Naive thymus-derived CD4-positive, alpha-beta T cell (primary cell): ENCODE measurements at regions of chr16 and their contacts with region 1.

Region 1: GRCh38 chr16:10737068-10737625 is 6.5 kb upstream of the NUBP1 start:
- DNase-seq: peak; percentile 36 to 86 (median 74)
- ATAC-seq: peak; percentile 94
- H3K4me3 ChIP-seq: peak overlapping the region; percentile 13
- H3K4me3 Mint-ChIP-seq: peak overlapping the region in 9 of 10 donors; percentile 13 to 76 (median 62)
- H3K27ac ChIP-seq: no peak overlapping the region
- H3K27ac Mint-ChIP-seq: peak overlapping the region in 8 of 9 donors; percentile 15 to 85 (median 64)
- H3K4me1 ChIP-seq: peaks cover 0 to 4% of the 10 kb centered on the region in 2 donors
- H3K4me1 Mint-ChIP-seq: peaks cover 0 to 34% (median 4%) of the 10 kb centered on the region in 7 donors
- H3K27me3 ChIP-seq: no peaks in the 10 kb centered on the region
- H3K27me3 Mint-ChIP-seq: peaks cover 0 to 5% (median 0%) of the 10 kb centered on the region in 5 donors

Region 2: DNA sequence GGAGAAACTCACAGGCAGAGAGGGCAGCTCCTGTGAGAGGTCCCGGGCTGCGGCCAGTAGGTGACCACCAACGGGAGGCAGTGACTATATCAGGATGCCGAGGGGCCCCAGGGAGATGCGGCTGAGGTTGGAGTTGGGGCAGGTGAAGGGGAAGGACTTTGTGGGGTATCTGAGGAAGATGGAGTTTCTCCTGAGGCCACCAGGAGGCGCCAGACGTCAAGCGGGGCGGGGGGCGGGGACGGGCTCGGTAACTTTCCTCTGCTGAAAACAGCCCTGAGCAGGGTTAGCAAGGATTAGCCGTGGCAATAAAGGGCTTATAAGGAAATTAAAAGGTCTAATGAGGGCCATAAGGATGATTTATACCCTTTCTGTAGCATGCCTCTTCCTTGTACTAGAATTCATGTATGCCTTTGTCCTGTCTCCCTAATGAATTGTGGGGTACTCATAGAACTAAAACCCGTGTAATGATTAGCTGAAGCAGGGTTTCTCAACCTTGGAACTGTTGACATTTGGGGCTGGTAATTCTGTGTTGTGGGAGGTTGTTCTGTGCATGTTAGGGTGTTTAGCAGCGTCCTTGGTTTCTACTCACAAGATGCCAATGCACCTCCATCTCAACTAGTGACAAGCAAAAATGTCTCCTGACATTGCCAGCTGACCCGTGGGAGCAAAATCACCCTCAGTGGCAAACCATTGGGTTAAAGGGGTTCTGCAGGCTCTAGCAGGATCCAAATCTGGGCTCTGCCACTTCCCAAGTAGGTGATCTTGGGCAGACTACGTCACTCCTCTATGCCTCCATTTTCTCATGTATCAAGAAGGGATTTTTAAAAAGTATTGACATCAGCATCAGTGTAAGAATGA is 480.1 kb before region 1 on chr16:
- CTCF ChIA-PET with region 1: interaction called, 7 read pairs
- POLR2A ChIA-PET with region 1: interaction called, 4 read pairs
- intact Hi-C with region 1: loop called (anchors 1 kb)
- DNase-seq: peak; percentile 10 to 52 (median 30)
- ATAC-seq: peak; percentile 74
- H3K4me3 ChIP-seq: no peak overlapping the region
- H3K4me3 Mint-ChIP-seq: peak overlapping the region in 1 of 10 donors; percentile 29
- H3K27ac ChIP-seq: no peak overlapping the region
- H3K27ac Mint-ChIP-seq: peak overlapping the region in 2 of 9 donors; percentile 55 to 56
- H3K4me1 ChIP-seq: no peaks in the 10 kb centered on the region
- H3K4me1 Mint-ChIP-seq: peaks cover 0 to 5% (median 3%) of the 10 kb centered on the region in 7 donors
- H3K27me3 ChIP-seq: no peaks in the 10 kb centered on the region
- H3K27me3 Mint-ChIP-seq: peaks cover 1 to 11% (median 7%) of the 10 kb centered on the region in 5 donors

Region 3: GRCh38 chr16:10314811-10315210 is 422.3 kb before region 1 on chr16:
- CTCF ChIA-PET with region 1: interaction called, 11 read pairs
- POLR2A ChIA-PET with region 1: no interaction called
- intact Hi-C with region 1: loop called (anchors 1 to 5 kb)
- DNase-seq: peak in 6 of 9 donors; percentile 25 to 63 (median 46)
- ATAC-seq: peak; percentile 65
- H3K4me3 ChIP-seq: no peak overlapping the region
- H3K4me3 Mint-ChIP-seq: no peak overlapping the region
- H3K27ac ChIP-seq: no peak overlapping the region
- H3K27ac Mint-ChIP-seq: no peak overlapping the region
- H3K4me1 ChIP-seq: no peaks in the 10 kb centered on the region
- H3K4me1 Mint-ChIP-seq: peaks cover 9 to 27% (median 20%) of the 10 kb centered on the region in 7 donors
- H3K27me3 ChIP-seq: no peaks in the 10 kb centered on the region
- H3K27me3 Mint-ChIP-seq: no peaks in the 10 kb centered on the region

Region 4: DNA sequence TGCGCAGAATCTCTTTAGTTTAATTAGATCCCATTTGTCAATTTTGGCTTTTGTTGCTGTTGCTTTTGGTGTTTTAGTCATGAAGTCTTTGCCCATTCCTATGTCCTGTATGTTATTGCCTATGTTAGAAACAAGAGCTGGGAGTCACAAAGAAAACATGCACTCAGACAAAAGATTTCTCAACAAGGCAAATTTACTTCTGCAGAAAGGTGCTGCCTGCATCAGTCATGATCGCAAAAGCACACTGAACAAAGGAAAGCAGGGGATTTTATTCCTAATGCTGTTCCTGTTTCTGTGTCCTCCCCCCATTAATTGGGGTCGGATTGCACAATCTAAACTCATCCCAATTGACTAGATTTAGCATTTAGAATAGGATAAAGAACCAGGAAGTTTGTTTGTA is 295.4 kb before region 1 on chr16:
- CTCF ChIA-PET with region 1: no interaction called
- POLR2A ChIA-PET with region 1: no interaction called
- intact Hi-C with region 1: no loop called
- DNase-seq: no peak
- ATAC-seq: no peak
- H3K4me3 ChIP-seq: no peak overlapping the region
- H3K4me3 Mint-ChIP-seq: no peak overlapping the region
- H3K27ac ChIP-seq: no peak overlapping the region
- H3K27ac Mint-ChIP-seq: no peak overlapping the region
- H3K4me1 ChIP-seq: no peaks in the 10 kb centered on the region
- H3K4me1 Mint-ChIP-seq: peaks cover 0 to 1% (median 0%) of the 10 kb centered on the region in 7 donors
- H3K27me3 ChIP-seq: no peaks in the 10 kb centered on the region
- H3K27me3 Mint-ChIP-seq: no peaks in the 10 kb centered on the region

Region 5: DNA sequence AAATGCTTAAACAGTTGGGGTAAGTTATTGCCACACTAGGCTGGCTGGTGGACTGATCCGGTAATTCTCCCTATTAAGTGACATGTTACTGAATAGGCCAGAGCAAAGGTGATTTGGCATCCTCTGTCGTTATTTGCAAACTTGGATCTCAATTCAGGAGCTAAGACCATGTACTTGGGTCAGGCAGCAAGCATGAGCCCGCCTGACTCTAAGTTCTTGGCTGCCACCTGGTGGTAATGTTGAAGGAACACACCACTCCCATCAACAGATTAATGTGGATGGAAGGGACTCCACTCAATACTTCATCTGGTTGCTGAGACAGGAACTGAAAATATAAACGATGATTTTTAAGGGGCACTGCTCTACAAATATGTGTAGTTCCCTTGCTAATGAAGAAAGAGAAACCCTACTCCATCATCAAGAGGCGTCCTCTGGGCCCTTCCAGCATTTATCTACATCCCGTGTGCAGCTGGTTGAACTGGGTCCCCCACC is 227.6 kb before region 1 on chr16:
- CTCF ChIA-PET with region 1: interaction called, 33 read pairs
- POLR2A ChIA-PET with region 1: interaction called, 5 read pairs
- intact Hi-C with region 1: loop called (anchors 1 kb)
- DNase-seq: peak; percentile 18 to 78 (median 65)
- ATAC-seq: peak; percentile 90
- H3K4me3 ChIP-seq: no peak overlapping the region
- H3K4me3 Mint-ChIP-seq: no peak overlapping the region
- H3K27ac ChIP-seq: no peak overlapping the region
- H3K27ac Mint-ChIP-seq: peak overlapping the region in 5 of 9 donors; percentile 6 to 69 (median 53)
- H3K4me1 ChIP-seq: no peaks in the 10 kb centered on the region
- H3K4me1 Mint-ChIP-seq: peaks cover 2 to 10% (median 4%) of the 10 kb centered on the region in 7 donors
- H3K27me3 ChIP-seq: no peaks in the 10 kb centered on the region
- H3K27me3 Mint-ChIP-seq: peaks cover 0 to 8% (median 0%) of the 10 kb centered on the region in 5 donors

Region 6: DNA sequence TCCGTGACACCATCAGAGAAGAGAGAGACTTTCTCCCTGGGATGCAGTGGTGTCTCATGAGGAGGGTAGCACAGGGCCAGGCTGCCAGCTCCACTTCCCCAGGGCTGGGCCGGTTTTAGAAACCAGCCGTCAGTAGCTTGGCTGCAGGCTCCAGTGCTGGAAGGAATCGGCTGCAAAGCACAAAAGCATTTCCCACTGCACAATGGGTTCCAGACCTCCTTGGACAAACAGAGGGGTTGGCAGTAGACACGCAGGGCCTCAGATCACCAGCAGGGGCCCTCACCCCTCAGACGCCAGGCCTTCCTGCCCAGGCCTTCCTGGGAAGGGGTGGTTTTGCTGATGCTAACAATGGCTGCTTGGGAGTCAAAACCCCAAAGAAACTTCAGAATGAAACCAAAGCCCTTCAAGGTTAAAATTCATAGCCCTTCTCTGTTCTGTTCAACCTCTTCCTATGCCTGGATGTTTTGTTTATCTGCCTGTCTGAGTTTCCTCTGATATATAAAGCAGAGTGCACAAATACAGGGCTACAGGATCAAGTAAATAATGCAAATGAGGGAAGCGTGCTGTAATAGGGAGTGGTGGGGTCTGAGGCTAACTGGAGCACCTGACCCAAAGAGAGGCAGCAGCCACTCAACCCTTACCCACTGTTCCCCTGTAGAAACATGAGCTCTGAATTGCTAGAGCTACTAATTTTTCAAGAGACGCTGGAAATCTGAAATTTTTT is 68.7 kb before region 1 on chr16:
- CTCF ChIA-PET with region 1: no interaction called
- POLR2A ChIA-PET with region 1: no interaction called
- intact Hi-C with region 1: loop called (anchors 1 to 2 kb)
- DNase-seq: peak in 1 of 9 donors; percentile 2
- ATAC-seq: no peak
- H3K4me3 ChIP-seq: no peak overlapping the region
- H3K4me3 Mint-ChIP-seq: no peak overlapping the region
- H3K27ac ChIP-seq: no peak overlapping the region
- H3K27ac Mint-ChIP-seq: no peak overlapping the region
- H3K4me1 ChIP-seq: no peaks in the 10 kb centered on the region
- H3K4me1 Mint-ChIP-seq: peaks cover 0 to 2% (median 0%) of the 10 kb centered on the region in 7 donors
- H3K27me3 ChIP-seq: no peaks in the 10 kb centered on the region
- H3K27me3 Mint-ChIP-seq: peaks cover 0 to 16% (median 4%) of the 10 kb centered on the region in 5 donors

Region 7: DNA sequence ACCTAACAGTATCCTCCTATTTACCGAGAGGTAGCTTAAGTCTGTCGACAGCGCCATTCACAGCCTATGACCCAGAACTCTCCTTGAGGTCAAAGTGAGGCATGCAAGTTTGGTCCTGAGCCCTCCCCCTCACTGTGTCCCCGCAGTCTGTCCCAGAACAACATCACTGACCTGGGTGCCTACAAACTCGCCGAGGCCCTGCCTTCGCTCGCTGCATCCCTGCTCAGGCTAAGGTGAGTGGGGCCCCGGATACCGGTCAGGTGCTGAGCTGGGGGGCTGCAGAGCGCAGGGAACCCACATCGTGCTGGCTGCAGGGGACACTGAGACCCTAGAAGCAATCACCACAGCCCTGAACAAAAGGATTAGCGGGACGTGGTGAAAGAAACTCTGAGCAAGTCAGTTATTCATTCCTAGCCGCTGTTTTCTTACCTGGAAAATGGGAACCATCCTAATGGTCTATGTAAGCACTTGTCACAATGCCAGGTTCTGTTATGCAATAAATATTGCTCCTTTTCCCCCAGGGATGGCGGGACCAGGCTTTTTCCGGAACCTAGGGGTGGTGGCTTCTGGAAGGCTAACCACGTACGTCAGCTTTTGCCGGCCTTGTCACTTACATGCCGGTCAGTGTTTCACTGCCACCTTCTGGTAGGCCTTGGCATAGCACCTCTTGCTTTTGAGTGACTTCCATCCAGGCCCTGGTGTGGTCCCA is 181.3 kb after region 1 on chr16:
- CTCF ChIA-PET with region 1: no interaction called
- POLR2A ChIA-PET with region 1: no interaction called
- intact Hi-C with region 1: loop called in 1 of 2 experiments (anchors 1 kb)
- DNase-seq: peak in 8 of 9 donors; percentile 44 to 83 (median 52)
- ATAC-seq: peak; percentile 90
- H3K4me3 ChIP-seq: no peak overlapping the region
- H3K4me3 Mint-ChIP-seq: peak overlapping the region in 2 of 10 donors; percentile 21 to 45
- H3K27ac ChIP-seq: no peak overlapping the region
- H3K27ac Mint-ChIP-seq: no peak overlapping the region
- H3K4me1 ChIP-seq: no peaks in the 10 kb centered on the region
- H3K4me1 Mint-ChIP-seq: peaks cover 0 to 12% (median 4%) of the 10 kb centered on the region in 7 donors
- H3K27me3 ChIP-seq: no peaks in the 10 kb centered on the region
- H3K27me3 Mint-ChIP-seq: no peaks in the 10 kb centered on the region